Activated naive CD8-positive, alpha-beta T cell treated with anti-CD3 and anti-CD28 coated beads, Interleukin-2, amount 10 ng/mL, durations not matched to agents 7 days and 5 days (primary cell): ENCODE measurements at regions of chr17 and their contacts with region 1.

Region 1: GRCh38 chr17:28842282-28843012 is at the start of gene FAM222B:
- DNase-seq: peak; percentile 91
- ATAC-seq: peak; percentile 99
- H3K4me3 Mint-ChIP-seq: peak within 1 kb of the TSS; percentile 100
- H3K27ac Mint-ChIP-seq: peak within 1 kb of the TSS; percentile 97
- H3K4me1 Mint-ChIP-seq: peaks cover 21% of the 10 kb centered on the region
- H3K27me3 Mint-ChIP-seq: no peaks in the 10 kb centered on the region
- total RNA-seq, gene FAM222B: 17.0 to 21.2 TPM

Region 2: DNA sequence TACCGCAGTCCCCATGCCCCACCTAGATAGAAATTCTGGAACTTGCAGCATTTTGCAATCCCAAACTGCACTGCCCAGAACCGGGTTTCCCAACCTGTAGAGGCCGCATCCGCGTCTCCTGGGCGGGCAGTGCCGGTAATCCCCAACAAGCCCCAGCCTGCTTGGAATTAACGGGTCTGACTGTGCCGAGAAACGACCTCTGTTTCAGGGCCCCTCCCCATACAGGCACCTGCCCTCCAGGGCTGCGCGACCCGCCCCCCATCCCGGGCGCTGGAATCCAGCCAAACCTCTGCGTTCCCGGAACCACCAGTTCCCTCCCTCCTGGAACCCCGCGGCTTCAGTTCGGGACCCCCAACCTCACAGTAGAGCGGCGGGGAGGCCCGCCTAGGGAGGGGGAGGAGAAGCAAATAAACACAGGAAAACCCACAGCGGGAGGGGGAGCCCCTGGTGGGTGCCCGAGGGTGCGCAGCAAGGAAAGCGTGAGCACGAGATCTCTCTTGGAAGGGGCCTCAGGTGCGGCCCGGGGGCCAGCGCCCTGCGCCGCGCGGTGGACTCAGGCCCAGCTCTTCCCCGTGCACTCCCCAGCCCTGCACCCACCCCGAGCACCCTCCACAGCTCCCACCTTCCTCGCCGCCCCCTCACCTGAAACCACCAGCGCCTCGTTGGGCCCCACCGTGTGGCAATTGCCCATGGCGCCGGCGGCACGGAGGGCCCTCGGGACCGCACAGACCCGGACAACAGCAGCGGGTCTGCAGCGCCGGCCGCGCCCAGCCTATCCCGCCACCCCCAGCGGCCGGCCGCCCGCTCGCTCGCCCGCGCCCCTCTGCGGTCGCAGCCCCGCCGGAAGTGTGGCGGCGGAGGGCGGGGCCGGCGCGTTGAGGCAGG is 54.7 kb after region 1 on chr17 and contains the start of gene FLOT2:
- POLR2A ChIA-PET with region 1: interaction called, 15 read pairs
- DNase-seq: peak; percentile 80
- ATAC-seq: peak; percentile 62
- H3K4me3 Mint-ChIP-seq: peak within 1 kb of the TSS; percentile 98
- H3K27ac Mint-ChIP-seq: peak within 1 kb of the TSS; percentile 97
- H3K4me1 Mint-ChIP-seq: peaks cover 56% of the 10 kb centered on the region
- H3K27me3 Mint-ChIP-seq: no peaks in the 10 kb centered on the region
- total RNA-seq, gene FLOT2: 195 to 216 TPM